Posterior vena cava (tissue), 2 donors: ENCODE measurements at regions of chr9 and their contacts with region 1.

Region 1: GRCh38 chr9:114382699-114383520 is 4.9 kb downstream of the AKNA start:
- DNase-seq: peak; percentile 76

Region 2: GRCh38 chr9:114348906-114349482 is 33.9 kb before region 1 on chr9:
- intact Hi-C with region 1: loop called in 1 of 2 experiments (anchors 5 kb)
- DNase-seq: peak; percentile 90

Region 3: GRCh38 chr9:114366334-114367128 is 16.4 kb before region 1 on chr9:
- intact Hi-C with region 1: no loop called
- DNase-seq: peak; percentile 80